ENCODE measurements at regions of chr3 and their contacts with region 1.

Region 1: DNA sequence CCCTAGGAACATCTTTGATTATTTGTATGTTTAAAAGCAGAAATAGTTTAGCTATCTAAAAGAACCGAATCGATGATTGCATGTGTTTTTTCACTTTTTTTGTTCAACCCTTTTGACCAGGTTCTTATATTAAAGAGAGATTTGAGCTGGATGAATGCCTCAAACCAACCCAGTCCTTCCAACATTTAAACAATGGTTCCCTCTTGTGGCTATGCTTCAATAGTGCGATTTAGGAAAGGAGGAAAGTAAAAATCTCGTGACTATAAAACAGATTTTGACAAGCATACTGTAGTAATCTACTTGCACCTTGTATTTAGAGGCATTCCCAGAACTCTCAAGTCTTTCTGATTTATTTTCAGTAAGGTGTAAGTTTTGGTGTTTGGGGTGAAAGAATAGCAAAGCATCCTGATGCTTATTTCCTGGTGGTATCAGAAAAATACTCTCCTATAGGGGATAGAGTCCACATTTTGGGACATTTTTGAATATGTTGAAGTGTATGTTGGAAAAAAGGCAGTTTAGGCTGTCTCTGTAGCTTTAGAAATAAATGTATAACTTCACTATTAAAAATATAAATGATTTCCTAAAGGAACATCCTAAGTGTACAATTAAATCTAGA is 159.6 kb upstream of the KCNH8 start:
- DNase-seq: no peak
- H3K4me3 Mint-ChIP-seq: peak overlapping the region; percentile 82
- H3K27ac Mint-ChIP-seq: peak overlapping the region; percentile 92
- H3K4me1 Mint-ChIP-seq: peaks cover 34% of the 10 kb centered on the region
- H3K27me3 Mint-ChIP-seq: peaks cover 3% of the 10 kb centered on the region

Region 2: GRCh38 chr3:18444595-18445400 is 543.9 kb before region 1 on chr3:
- intact Hi-C with region 1: loop called (anchors 2 kb)
- DNase-seq: peak; percentile 77
- H3K4me3 Mint-ChIP-seq: peak overlapping the region; percentile 97
- H3K27ac Mint-ChIP-seq: peak overlapping the region; percentile 97
- H3K4me1 Mint-ChIP-seq: peaks cover 31% of the 10 kb centered on the region
- H3K27me3 Mint-ChIP-seq: no peaks in the 10 kb centered on the region

Region 3: GRCh38 chr3:18758047-18758704 is 230.5 kb before region 1 on chr3:
- intact Hi-C with region 1: loop called (anchors 1 kb)
- DNase-seq: peak; percentile 28
- H3K4me3 Mint-ChIP-seq: no peak overlapping the region
- H3K27ac Mint-ChIP-seq: peak overlapping the region; percentile 85
- H3K4me1 Mint-ChIP-seq: peaks cover 43% of the 10 kb centered on the region
- H3K27me3 Mint-ChIP-seq: no peaks in the 10 kb centered on the region

Region 4: GRCh38 chr3:18830087-18830486 is 158.6 kb before region 1 on chr3:
- intact Hi-C with region 1: loop called (anchors 5 kb)
- DNase-seq: no peak
- H3K4me3 Mint-ChIP-seq: no peak overlapping the region
- H3K27ac Mint-ChIP-seq: peak overlapping the region; percentile 35
- H3K4me1 Mint-ChIP-seq: peaks cover 22% of the 10 kb centered on the region
- H3K27me3 Mint-ChIP-seq: no peaks in the 10 kb centered on the region

Region 5: DNA sequence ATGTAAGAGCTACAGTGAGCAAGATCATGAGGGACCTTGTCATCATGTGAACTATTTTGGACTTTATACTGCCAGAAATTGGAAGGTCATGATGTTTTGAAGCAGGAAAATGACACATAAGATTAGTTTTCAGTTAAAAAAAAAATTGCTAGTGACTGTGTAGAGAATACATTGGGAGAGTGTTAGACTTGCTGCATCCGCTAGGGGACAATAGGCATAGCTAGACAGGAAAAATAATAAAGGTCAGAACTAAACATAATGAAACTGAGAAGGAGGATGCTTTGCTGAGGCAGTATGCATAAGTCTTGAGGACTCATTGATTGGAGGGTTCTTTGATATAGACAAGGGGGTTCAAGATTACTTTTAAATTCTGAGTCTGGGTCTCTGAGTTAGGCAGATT is 116.3 kb before region 1 on chr3:
- intact Hi-C with region 1: loop called (anchors 1 kb)
- DNase-seq: no peak
- H3K4me3 Mint-ChIP-seq: no peak overlapping the region
- H3K27ac Mint-ChIP-seq: no peak overlapping the region
- H3K4me1 Mint-ChIP-seq: peaks cover 43% of the 10 kb centered on the region
- H3K27me3 Mint-ChIP-seq: no peaks in the 10 kb centered on the region